ENCODE measurements at regions of chr1 and their contacts with region 1.

Region 1: DNA sequence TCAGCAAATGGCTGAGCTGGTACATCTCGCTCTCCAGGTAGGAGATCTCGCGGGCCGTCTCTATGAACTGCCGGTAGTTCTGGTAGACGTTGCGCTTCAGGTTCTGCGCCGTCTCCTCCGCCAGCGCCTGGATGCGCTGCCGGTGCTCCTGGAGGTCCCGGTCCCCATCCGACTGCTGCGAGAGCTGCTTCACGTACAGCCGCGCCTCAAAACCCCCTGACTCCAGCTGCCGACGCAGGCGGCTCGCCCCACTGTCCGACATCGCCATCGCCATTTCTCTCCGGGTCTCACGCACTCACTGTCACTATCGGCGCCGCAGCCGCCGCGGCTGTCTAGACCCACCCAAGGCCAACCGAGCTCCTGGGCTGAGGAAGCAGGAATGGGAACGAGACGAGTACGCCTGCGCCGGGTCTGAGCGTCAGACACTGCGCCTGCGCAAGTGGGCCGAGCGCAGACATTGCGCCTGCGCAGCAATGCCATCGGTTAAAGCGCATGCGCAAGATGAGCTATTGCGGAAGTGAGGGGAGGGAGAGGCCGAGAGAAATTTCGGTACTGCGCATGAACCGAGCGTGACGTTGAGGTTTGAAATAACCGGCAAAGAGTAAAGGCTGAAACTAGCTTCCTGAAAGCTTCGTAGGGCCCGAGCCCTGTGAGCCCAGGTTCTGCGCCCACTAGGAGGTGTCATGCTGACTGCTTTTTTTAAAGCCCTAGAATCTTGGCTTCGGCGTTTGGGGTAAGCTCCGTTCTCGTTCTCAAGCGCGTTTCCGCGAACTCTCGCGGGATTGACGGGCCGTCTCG is at the start of gene EXOC8:
- DNase-seq: peak; percentile 95 to 99 (median 96)
- ATAC-seq: peak; percentile 75
- H3K4me3 ChIP-seq: peak within 1 kb of the TSS; percentile 97
- H3K4me3 Mint-ChIP-seq: peak within 1 kb of the TSS; percentile 99
- H3K27ac ChIP-seq: peak within 1 kb of the TSS; percentile 98 to 100
- H3K27ac Mint-ChIP-seq: peak within 1 kb of the TSS; percentile 100
- H3K4me1 ChIP-seq: peaks cover 47% of the 10 kb centered on the region
- H3K4me1 Mint-ChIP-seq: peaks cover 76% of the 10 kb centered on the region
- H3K27me3 ChIP-seq: no peaks in the 10 kb centered on the region
- H3K27me3 Mint-ChIP-seq: peaks cover 5% of the 10 kb centered on the region
- CTCF ChIP-seq: peak; percentile 33
- total RNA-seq, gene EXOC8: 28.0 to 31.9 TPM

Region 2: GRCh38 chr1:231240883-231241735 is 96.6 kb before region 1 on chr1 and contains the start of gene GNPAT:
- CTCF ChIA-PET with region 1: no interaction called
- POLR2A ChIA-PET with region 1: interaction called, 20 read pairs
- intact Hi-C with region 1: loop called (anchors 2 to 10 kb)
- DNase-seq: peak; percentile 83 to 95 (median 90)
- ATAC-seq: peak; percentile 95
- H3K4me3 ChIP-seq: peak within 1 kb of the TSS; percentile 93
- H3K4me3 Mint-ChIP-seq: peak within 1 kb of the TSS; percentile 98
- H3K27ac ChIP-seq: peak within 1 kb of the TSS; percentile 67 to 77
- H3K27ac Mint-ChIP-seq: peak within 1 kb of the TSS; percentile 87
- H3K4me1 ChIP-seq: peaks cover 30% of the 10 kb centered on the region
- H3K4me1 Mint-ChIP-seq: peaks cover 83% of the 10 kb centered on the region
- H3K27me3 ChIP-seq: no peaks in the 10 kb centered on the region
- H3K27me3 Mint-ChIP-seq: no peaks in the 10 kb centered on the region
- CTCF ChIP-seq: no peak
- total RNA-seq, gene GNPAT: 11.8 to 12.8 TPM

Region 3: DNA sequence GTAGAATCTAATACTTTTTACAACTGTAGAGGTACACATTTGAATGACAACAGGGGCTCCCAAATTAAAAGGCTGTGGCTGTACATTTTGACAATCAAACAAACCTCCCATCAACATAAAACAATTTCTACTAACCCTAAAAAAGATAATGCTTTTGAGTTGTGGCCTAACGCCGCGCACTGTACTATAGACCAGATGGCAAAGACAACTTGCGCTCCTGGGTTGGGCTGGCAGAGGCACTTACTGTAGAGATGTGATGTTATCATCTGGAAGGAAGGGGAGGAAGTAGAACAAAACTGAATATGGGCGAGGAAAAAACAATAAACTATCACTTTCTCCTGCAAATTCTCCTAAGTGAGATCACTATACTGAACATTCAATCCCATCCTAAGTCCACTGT is 26.5 kb after region 1 on chr1:
- CTCF ChIA-PET with region 1: no interaction called
- POLR2A ChIA-PET with region 1: interaction called, 16 read pairs
- intact Hi-C with region 1: no loop called
- DNase-seq: no peak
- ATAC-seq: no peak
- H3K4me3 ChIP-seq: no peak overlapping the region
- H3K4me3 Mint-ChIP-seq: no peak overlapping the region
- H3K27ac ChIP-seq: no peak overlapping the region
- H3K27ac Mint-ChIP-seq: no peak overlapping the region
- H3K4me1 ChIP-seq: no peaks in the 10 kb centered on the region
- H3K4me1 Mint-ChIP-seq: peaks cover 4% of the 10 kb centered on the region
- H3K27me3 ChIP-seq: no peaks in the 10 kb centered on the region
- H3K27me3 Mint-ChIP-seq: no peaks in the 10 kb centered on the region
- CTCF ChIP-seq: no peak

Region 4: GRCh38 chr1:231612393-231613089 is 274.9 kb after region 1 on chr1:
- CTCF ChIA-PET with region 1: no interaction called
- POLR2A ChIA-PET with region 1: interaction called, 12 read pairs
- intact Hi-C with region 1: no loop called
- DNase-seq: peak in 12 of 14 experiments; percentile 31 to 87 (median 50)
- ATAC-seq: peak; percentile 97
- H3K4me3 ChIP-seq: peak overlapping the region; percentile 35
- H3K4me3 Mint-ChIP-seq: peak overlapping the region; percentile 72
- H3K27ac ChIP-seq: peak overlapping the region; percentile 39 to 80
- H3K27ac Mint-ChIP-seq: peak overlapping the region; percentile 81
- H3K4me1 ChIP-seq: peaks cover 43% of the 10 kb centered on the region
- H3K4me1 Mint-ChIP-seq: peaks cover 61% of the 10 kb centered on the region
- H3K27me3 ChIP-seq: no peaks in the 10 kb centered on the region
- H3K27me3 Mint-ChIP-seq: no peaks in the 10 kb centered on the region
- CTCF ChIP-seq: no peak

Region 5: GRCh38 chr1:231866392-231867331 is 529.0 kb after region 1 on chr1:
- CTCF ChIA-PET with region 1: no interaction called
- POLR2A ChIA-PET with region 1: no interaction called
- intact Hi-C with region 1: no loop called
- DNase-seq: peak; percentile 22 to 81 (median 45)
- ATAC-seq: no peak
- H3K4me3 ChIP-seq: no peak overlapping the region
- H3K4me3 Mint-ChIP-seq: no peak overlapping the region
- H3K27ac ChIP-seq: no peak overlapping the region
- H3K27ac Mint-ChIP-seq: peak overlapping the region; percentile 31
- H3K4me1 ChIP-seq: peaks cover 17% of the 10 kb centered on the region
- H3K4me1 Mint-ChIP-seq: peaks cover 66% of the 10 kb centered on the region
- H3K27me3 ChIP-seq: no peaks in the 10 kb centered on the region
- H3K27me3 Mint-ChIP-seq: no peaks in the 10 kb centered on the region
- CTCF ChIP-seq: peak; percentile 98

Region 6: GRCh38 chr1:233326811-233327650 is 1989.4 kb after region 1 on chr1:
- CTCF ChIA-PET with region 1: no interaction called
- POLR2A ChIA-PET with region 1: no interaction called
- intact Hi-C with region 1: loop called in 1 of 2 experiments (anchors 5 kb)
- DNase-seq: peak; percentile 72 to 98 (median 85)
- ATAC-seq: peak; percentile 92
- H3K4me3 ChIP-seq: peak overlapping the region; percentile 49
- H3K4me3 Mint-ChIP-seq: peak overlapping the region; percentile 94
- H3K27ac ChIP-seq: peak overlapping the region in 1 of 2 donors; percentile 30
- H3K27ac Mint-ChIP-seq: peak overlapping the region; percentile 77
- H3K4me1 ChIP-seq: peaks cover 13% of the 10 kb centered on the region
- H3K4me1 Mint-ChIP-seq: peaks cover 11% of the 10 kb centered on the region
- H3K27me3 ChIP-seq: no peaks in the 10 kb centered on the region
- H3K27me3 Mint-ChIP-seq: peaks cover 3% of the 10 kb centered on the region
- CTCF ChIP-seq: no peak

Measured in CD4-positive, alpha-beta T cell (primary cell).